ENCODE measurements at regions of chrX and their contacts with region 1.

Region 1: GRCh38 chrX:46446727-46447378 is 98.4 kb downstream of the ZNF674 start:
- DNase-seq: peak; percentile 67 to 93 (median 84)
- ATAC-seq: peak; percentile 91
- H3K4me3 ChIP-seq: peak overlapping the region; percentile 83 to 85
- H3K4me3 Mint-ChIP-seq: peak overlapping the region; percentile 84
- H3K27ac ChIP-seq: peak overlapping the region; percentile 82 to 90
- H3K27ac Mint-ChIP-seq: peak overlapping the region; percentile 94
- H3K4me1 ChIP-seq: peaks cover 16% of the 10 kb centered on the region
- H3K4me1 Mint-ChIP-seq: peaks cover 26% of the 10 kb centered on the region
- H3K27me3 ChIP-seq: no peaks in the 10 kb centered on the region
- H3K27me3 Mint-ChIP-seq: no peaks in the 10 kb centered on the region
- CTCF ChIP-seq: no peak

Region 2: DNA sequence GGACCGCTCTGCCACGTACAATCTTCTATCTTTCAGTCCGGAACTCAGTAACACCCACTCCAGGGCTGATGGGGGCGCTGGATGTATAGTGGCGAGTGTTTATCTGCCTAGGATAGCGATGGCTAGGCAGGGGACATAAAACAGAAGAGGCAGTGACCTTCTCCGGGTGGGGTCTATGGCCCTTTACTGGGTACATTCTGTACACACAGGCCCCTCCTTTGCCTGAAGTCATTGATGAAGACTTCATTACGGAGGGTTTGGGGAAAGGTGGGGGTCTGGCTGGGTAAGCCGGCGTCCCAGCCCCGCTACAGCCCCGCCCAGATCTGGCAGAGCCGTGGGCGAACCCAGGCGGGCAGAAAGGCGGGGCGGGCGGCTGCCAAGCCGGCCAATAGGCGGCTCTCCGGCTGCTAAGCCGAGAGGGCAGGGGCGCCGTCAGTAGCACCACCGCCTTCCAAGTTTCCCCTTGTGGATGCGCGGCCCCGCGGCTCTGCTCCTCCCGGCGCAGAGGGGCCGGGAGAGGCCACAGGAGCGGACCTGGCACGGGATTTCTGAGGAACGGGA is 126.6 kb after region 1 on chrX and contains the start of gene CHST7:
- CTCF ChIA-PET with region 1: no interaction called
- POLR2A ChIA-PET with region 1: no interaction called
- intact Hi-C with region 1: loop called in 1 of 2 experiments (anchors 10 kb)
- DNase-seq: peak; percentile 15 to 77 (median 54)
- ATAC-seq: peak; percentile 57
- H3K4me3 ChIP-seq: peak within 1 kb of the TSS; percentile 63 to 64
- H3K4me3 Mint-ChIP-seq: peak within 1 kb of the TSS; percentile 79
- H3K27ac ChIP-seq: peak within 1 kb of the TSS; percentile 45 to 77
- H3K27ac Mint-ChIP-seq: peak within 1 kb of the TSS; percentile 87
- H3K4me1 ChIP-seq: peaks cover 27% of the 10 kb centered on the region
- H3K4me1 Mint-ChIP-seq: peaks cover 34% of the 10 kb centered on the region
- H3K27me3 ChIP-seq: no peaks in the 10 kb centered on the region
- H3K27me3 Mint-ChIP-seq: peaks cover 3% of the 10 kb centered on the region
- CTCF ChIP-seq: no peak
- total RNA-seq, gene CHST7: 9.4 to 9.7 TPM

Region 3: GRCh38 chrX:46836701-46837557 is 390.1 kb after region 1 on chrX and contains the start of gene RP2:
- CTCF ChIA-PET with region 1: no interaction called
- POLR2A ChIA-PET with region 1: no interaction called
- intact Hi-C with region 1: loop called in 1 of 2 experiments (anchors 5 kb)
- DNase-seq: peak; percentile 61 to 92 (median 86)
- ATAC-seq: peak; percentile 95
- H3K4me3 ChIP-seq: peak within 1 kb of the TSS; percentile 95 to 96
- H3K4me3 Mint-ChIP-seq: peak within 1 kb of the TSS; percentile 97
- H3K27ac ChIP-seq: peak within 1 kb of the TSS; percentile 82 to 91
- H3K27ac Mint-ChIP-seq: peak within 1 kb of the TSS; percentile 95
- H3K4me1 ChIP-seq: peaks cover 15% of the 10 kb centered on the region
- H3K4me1 Mint-ChIP-seq: peaks cover 24% of the 10 kb centered on the region
- H3K27me3 ChIP-seq: no peaks in the 10 kb centered on the region
- H3K27me3 Mint-ChIP-seq: no peaks in the 10 kb centered on the region
- CTCF ChIP-seq: no peak
- total RNA-seq, gene RP2: 4.4 to 4.9 TPM

Region 4: DNA sequence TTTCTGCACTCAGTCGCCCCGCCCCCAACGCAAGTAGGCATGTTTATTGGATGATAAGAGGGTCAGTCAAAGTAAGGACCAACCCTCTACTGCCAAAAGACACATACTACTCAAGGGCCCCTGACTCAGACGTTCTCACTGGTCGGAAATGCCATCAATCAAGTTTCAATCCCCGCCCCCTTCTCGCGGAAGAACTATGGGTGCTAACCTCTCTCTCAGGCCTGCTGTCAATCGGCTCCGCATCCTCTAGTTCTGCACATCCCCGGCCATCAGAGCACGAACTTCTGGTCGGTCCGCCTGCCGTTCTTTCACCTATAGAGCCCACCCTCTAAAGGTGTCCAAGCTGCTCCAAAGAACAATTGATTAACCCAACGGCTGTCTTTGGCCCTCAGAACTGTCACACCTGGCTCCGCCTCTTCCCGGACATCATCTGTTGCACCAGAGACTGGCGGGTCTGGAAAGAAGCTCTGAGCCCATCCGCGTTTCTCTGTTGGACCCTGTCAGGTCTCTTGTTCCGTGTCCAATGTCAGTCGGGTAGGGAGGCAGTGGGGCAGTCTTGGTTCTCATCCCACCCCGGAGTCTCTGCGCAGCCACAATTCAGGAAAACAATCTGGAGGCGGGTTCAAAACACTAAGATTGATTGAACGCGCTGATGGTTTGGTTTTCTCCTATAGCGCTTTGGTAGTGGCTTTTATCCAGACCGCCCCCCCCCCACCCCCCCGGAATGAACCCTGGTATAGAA is 682.5 kb after region 1 on chrX:
- CTCF ChIA-PET with region 1: no interaction called
- POLR2A ChIA-PET with region 1: no interaction called
- intact Hi-C with region 1: loop called in 1 of 2 experiments (anchors 5 kb)
- DNase-seq: peak; percentile 76 to 95 (median 86)
- ATAC-seq: peak; percentile 98
- H3K4me3 ChIP-seq: peak overlapping the region; percentile 74 to 80
- H3K4me3 Mint-ChIP-seq: peak overlapping the region; percentile 97
- H3K27ac ChIP-seq: peak overlapping the region; percentile 73 to 85
- H3K27ac Mint-ChIP-seq: peak overlapping the region; percentile 98
- H3K4me1 ChIP-seq: no peaks in the 10 kb centered on the region
- H3K4me1 Mint-ChIP-seq: peaks cover 4% of the 10 kb centered on the region
- H3K27me3 ChIP-seq: no peaks in the 10 kb centered on the region
- H3K27me3 Mint-ChIP-seq: no peaks in the 10 kb centered on the region
- CTCF ChIP-seq: no peak

Region 5: DNA sequence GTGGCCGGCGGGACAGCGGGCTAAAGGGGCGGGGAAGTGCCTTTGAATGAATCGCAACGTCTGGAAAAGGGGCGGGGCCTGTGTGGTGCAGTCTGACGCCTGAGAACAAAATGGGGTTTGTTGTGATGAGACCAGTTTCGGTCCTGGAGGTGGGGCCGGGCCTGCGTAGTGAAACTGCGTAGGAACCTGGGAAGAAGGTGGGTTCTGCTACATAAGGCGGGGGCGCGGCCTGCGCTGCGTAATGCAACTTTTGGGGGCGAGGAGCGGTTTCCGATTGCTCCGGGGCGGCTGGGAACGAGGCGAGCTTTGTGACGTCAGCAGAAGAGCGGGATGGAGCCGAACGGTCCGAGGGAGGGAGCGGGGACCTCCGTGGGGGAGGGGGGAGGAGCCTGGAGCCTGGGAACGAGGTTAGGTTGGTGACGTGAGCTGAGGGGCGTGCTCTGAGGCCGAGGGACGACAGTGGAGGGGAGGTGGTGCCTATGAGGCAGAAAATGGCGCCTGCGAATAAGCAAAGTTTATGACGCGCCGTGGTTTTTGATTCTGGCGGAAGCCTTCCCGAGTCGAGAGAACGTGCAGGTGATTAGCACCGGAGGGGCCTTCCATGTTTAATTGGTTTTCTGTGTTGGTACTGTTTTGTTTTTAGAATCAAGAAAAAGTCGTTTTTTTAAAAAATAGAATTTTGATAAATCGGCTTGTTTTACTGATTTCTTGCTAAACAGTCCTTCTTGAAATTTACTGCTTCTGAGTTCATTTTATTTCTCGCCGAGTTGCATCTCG is 786.7 kb after region 1 on chrX:
- CTCF ChIA-PET with region 1: no interaction called
- POLR2A ChIA-PET with region 1: no interaction called
- intact Hi-C with region 1: loop called in 1 of 2 experiments (anchors 5 kb)
- DNase-seq: peak; percentile 81 to 98 (median 95)
- ATAC-seq: peak; percentile 89
- H3K4me3 ChIP-seq: peak overlapping the region; percentile 77 to 96
- H3K4me3 Mint-ChIP-seq: peak overlapping the region; percentile 96
- H3K27ac ChIP-seq: peak overlapping the region; percentile 100
- H3K27ac Mint-ChIP-seq: peak overlapping the region; percentile 99
- H3K4me1 ChIP-seq: peaks cover 34% of the 10 kb centered on the region
- H3K4me1 Mint-ChIP-seq: peaks cover 40% of the 10 kb centered on the region
- H3K27me3 ChIP-seq: no peaks in the 10 kb centered on the region
- H3K27me3 Mint-ChIP-seq: no peaks in the 10 kb centered on the region
- CTCF ChIP-seq: no peak

Measured in CD8-positive, alpha-beta T cell (primary cell).